Sigmoid colon (tissue), 7 donors: ENCODE measurements at regions of chr17 and their contacts with region 1.

Region 1: DNA sequence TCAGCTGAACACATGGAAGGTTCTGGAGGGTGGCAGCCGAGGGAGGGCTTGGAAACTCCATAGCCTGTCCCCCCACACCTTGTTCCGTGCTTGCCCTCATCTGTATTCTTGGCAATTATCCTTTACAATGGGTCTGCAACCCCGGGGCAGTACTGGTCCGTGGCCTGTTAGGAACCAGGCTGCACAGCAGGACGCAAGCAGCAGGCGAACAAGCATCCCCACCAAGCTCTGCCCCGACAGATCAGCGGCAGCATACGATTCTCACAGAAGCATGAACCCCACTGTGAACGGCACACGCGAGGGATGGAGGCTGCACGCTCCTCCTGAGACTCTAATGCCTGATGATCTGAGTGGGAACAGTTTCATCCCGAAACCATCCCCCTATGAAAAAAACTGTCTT is 6.2 kb downstream of the WDR45B start:
- DNase-seq: no peak
- H3K4me3 ChIP-seq: no peak overlapping the region
- H3K27ac ChIP-seq: no peak overlapping the region
- H3K4me1 ChIP-seq: peaks cover 0 to 37% (median 19%) of the 10 kb centered on the region in 4 donors
- H3K27me3 ChIP-seq: no peaks in the 10 kb centered on the region
- CTCF ChIP-seq: no peak
- EP300 ChIP-seq: no peak
- POLR2A ChIP-seq: no peak

Region 2: GRCh38 chr17:82592767-82593589 is 49.0 kb before region 1 on chr17:
- intact Hi-C with region 1: no loop called
- DNase-seq: peak; percentile 91
- H3K4me3 ChIP-seq: peak overlapping the region; percentile 55 to 62 (median 59)
- H3K27ac ChIP-seq: peak overlapping the region; percentile 91 to 93 (median 92)
- H3K4me1 ChIP-seq: peaks cover 0 to 64% (median 60%) of the 10 kb centered on the region in 4 donors
- H3K27me3 ChIP-seq: no peaks in the 10 kb centered on the region
- CTCF ChIP-seq: no peak
- EP300 ChIP-seq: no peak
- POLR2A ChIP-seq: no peak

Region 3: DNA sequence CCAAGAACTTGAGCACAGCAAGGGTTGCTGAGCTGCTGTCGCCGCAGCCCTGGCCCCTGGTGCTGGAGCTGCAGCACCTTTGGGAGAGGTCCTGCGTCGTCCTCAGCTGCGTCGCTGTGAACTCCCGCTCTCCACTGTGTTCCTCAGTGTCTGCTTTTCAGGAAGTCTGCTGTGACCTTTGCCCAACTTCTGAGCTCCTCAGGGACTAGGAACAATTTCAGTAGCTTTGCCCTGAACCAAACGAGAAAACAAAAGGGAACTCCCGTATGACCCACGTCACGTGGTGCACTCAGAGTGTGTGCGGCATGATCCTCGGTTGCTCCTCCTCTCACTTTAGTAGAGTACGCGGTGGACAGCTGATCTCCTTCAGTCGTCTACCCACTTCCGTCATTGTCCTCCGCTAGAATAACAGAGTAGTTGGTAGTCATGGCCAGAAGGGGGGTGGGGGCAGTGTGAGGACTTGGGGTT is 38.0 kb before region 1 on chr17:
- intact Hi-C with region 1: no loop called
- DNase-seq: peak; percentile 79
- H3K4me3 ChIP-seq: no peak overlapping the region
- H3K27ac ChIP-seq: peak overlapping the region in 1 of 4 donors; percentile 45
- H3K4me1 ChIP-seq: no peaks in the 10 kb centered on the region
- H3K27me3 ChIP-seq: no peaks in the 10 kb centered on the region
- CTCF ChIP-seq: no peak
- EP300 ChIP-seq: peak in 1 of 4 donors; percentile 30
- POLR2A ChIP-seq: no peak

Region 4: GRCh38 chr17:82615084-82616020 is 26.7 kb before region 1 on chr17:
- intact Hi-C with region 1: loop called (anchors 2 kb)
- DNase-seq: no peak
- H3K4me3 ChIP-seq: no peak overlapping the region
- H3K27ac ChIP-seq: no peak overlapping the region
- H3K4me1 ChIP-seq: no peaks in the 10 kb centered on the region
- H3K27me3 ChIP-seq: no peaks in the 10 kb centered on the region
- CTCF ChIP-seq: no peak
- EP300 ChIP-seq: no peak
- POLR2A ChIP-seq: no peak